Heart left ventricle (tissue), 16 donors: ENCODE measurements at regions of chr1 and their contacts with region 1.

Region 1: DNA sequence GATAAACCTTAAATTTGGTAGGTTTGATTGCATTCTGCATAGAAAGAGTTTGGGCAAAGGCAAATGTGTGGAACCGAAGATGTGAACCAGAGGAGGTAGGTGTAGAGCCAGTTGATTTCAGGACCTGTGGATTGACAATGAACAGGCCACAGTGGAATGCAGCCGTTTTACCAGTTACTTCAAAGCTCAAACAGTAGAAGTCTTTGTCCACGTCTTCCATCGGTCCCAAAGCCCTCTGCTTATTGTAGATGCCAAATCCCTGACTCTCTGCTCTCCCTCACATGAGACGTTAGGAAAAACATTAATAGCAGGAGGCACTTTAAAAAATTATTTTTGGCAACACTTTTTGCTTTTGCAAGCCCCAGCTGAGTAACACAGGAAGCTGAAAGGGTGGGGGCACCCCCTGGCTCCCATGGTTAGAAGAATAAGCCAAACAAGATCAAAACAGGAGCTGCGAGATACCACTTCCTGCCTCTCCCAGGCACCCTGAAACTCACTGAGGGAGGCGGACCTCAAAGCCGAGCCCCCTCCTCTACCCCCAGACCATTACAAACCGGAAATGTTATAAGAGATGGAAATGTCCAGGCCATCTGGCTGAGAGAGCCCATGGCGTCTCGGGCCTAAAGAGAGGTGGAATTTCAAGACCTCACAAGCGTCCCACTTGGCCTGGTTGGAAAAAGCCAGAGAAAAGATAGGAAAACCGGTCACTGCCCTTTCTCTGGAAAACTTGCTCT is 13.5 kb downstream of the TRAF3IP3 start:
- DNase-seq: peak; percentile 77 to 84 (median 84)
- ATAC-seq: peak; percentile 72 to 91 (median 90)
- H3K4me3 ChIP-seq: peak overlapping the region in 5 of 12 donors; percentile 16 to 59 (median 26)
- H3K27ac ChIP-seq: peak overlapping the region; percentile 56 to 90 (median 77)
- H3K4me1 ChIP-seq: peaks cover 4 to 48% (median 20%) of the 10 kb centered on the region in 12 donors
- H3K27me3 ChIP-seq: no peaks in the 10 kb centered on the region
- CTCF ChIP-seq: peak in 1 of 12 donors; percentile 15
- POLR2A ChIP-seq: no peak

Region 2: DNA sequence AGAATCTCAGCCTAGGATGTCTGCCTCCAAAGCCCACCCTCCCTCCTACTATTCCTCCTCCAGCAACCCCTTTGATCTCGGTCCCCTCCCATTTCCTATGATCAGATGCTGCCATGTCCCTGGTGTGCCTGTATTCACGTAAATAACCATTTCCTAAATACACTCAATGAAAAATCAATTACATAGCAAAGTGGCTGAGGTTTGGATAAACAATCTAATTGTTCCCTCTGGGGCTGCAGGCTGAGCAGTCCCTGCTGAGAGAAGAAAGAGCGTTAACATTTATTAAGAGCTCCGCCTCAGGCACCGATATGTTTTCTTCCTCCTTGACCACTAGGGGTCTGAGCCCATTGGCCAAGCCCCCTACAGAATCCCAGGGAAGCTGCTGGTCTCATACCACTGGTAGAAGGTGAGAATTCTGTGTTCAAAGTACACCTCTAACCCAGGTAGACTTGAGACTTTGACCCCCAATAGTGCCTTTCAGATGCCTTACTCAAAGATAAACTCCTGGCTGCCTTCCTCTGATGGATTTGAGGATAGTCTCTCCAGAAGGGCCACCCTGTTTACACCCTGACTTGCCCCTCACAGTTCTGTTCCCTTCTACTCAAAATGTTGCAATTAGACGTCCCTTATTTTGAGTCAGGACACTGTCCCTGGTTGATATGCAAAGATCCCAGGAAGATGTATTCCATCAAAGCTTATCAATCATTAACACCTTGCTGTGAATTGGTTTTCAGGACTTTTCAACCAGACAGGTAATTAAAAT is 219.7 kb before region 1 on chr1:
- intact Hi-C with region 1: no loop called
- DNase-seq: no peak
- ATAC-seq: no peak
- H3K4me3 ChIP-seq: no peak overlapping the region
- H3K27ac ChIP-seq: no peak overlapping the region
- H3K4me1 ChIP-seq: no peaks in the 10 kb centered on the region
- H3K27me3 ChIP-seq: peaks cover 0 to 11% (median 0%) of the 10 kb centered on the region in 9 donors
- CTCF ChIP-seq: peak in 3 of 12 donors; percentile 3 to 29 (median 8)
- POLR2A ChIP-seq: no peak

Region 3: DNA sequence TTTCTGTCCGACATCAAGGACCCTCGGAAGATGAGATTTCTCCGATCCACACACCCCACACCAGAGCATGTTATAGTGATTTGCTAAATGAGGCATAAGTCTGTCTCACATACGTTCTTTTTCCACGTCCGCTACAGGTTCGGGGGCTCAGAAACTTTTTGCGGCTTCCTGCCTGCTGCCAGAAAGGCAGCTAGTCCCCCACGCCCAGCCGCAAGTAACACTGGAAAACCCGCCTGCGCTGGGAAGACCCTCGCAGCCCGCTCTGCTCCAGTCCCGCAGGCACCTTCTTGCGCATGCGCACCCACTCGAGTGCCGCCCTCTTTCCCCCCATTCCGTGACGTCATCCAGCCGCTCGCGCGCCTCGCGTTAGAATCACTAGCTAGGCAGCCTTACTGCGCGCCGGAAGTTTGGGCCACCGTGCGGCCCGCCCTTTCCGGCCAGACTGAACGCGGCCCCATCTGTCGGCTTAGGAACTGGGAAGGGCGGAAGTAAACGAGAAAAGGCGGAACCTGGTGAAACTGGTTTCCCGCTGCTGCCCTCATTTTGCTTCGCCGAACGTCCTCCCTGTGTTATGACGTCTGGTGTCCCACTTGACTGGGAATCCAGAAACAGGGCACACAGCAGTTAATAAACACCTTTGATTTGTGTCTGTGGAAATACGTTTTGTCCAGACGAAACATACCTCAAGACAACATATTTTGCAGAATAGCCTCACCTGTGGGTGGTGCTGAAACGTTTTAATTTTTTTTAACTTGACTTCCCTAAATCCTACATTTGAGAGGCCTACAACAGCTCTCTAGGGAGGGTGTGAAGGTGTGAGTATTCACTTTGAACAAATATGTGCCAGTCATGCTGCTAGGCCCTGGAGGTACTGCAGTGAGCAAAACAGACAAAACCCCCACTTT is 15.2 kb after region 1 on chr1 and contains the start of gene C1orf74:
- intact Hi-C with region 1: loop called in 1 of 10 experiments (anchors 1 kb)
- DNase-seq: peak; percentile 99 to 100 (median 99)
- ATAC-seq: peak; percentile 93 to 99 (median 98)
- H3K4me3 ChIP-seq: peak within 1 kb of the TSS; percentile 42 to 76 (median 64)
- H3K27ac ChIP-seq: peak within 1 kb of the TSS; percentile 70 to 94 (median 86)
- H3K4me1 ChIP-seq: peaks cover 4 to 45% (median 20%) of the 10 kb centered on the region in 12 donors
- H3K27me3 ChIP-seq: no peaks in the 10 kb centered on the region
- CTCF ChIP-seq: peak in 2 of 12 donors; percentile 7 to 23
- POLR2A ChIP-seq: peak in 1 of 2 donors; percentile 83
- total RNA-seq, gene C1orf74: 1.6 to 2.6 (median 2.4) TPM

Region 4: GRCh38 chr1:209827384-209828262 is 58.3 kb after region 1 on chr1 and contains the start of gene UTP25:
- intact Hi-C with region 1: loop called in 1 of 10 experiments (anchors 5 kb)
- DNase-seq: peak; percentile 91 to 95 (median 93)
- ATAC-seq: peak; percentile 81 to 93 (median 89)
- H3K4me3 ChIP-seq: peak within 1 kb of the TSS; percentile 64 to 91 (median 80)
- H3K27ac ChIP-seq: peak within 1 kb of the TSS; percentile 0 to 86 (median 66)
- H3K4me1 ChIP-seq: peaks cover 0 to 27% (median 8%) of the 10 kb centered on the region in 12 donors
- H3K27me3 ChIP-seq: no peaks in the 10 kb centered on the region
- CTCF ChIP-seq: peak; percentile 55 to 90 (median 71)
- POLR2A ChIP-seq: peak in 1 of 2 donors; percentile 62
- total RNA-seq, gene UTP25: 1.6 to 5.5 (median 3.6) TPM

Region 5: GRCh38 chr1:209839875-209840491 is 70.6 kb after region 1 on chr1:
- intact Hi-C with region 1: no loop called
- DNase-seq: no peak
- ATAC-seq: peak in 2 of 4 donors; percentile 48 to 53
- H3K4me3 ChIP-seq: no peak overlapping the region
- H3K27ac ChIP-seq: peak overlapping the region in 2 of 12 donors; percentile 11 to 21
- H3K4me1 ChIP-seq: peaks cover 0 to 16% (median 0%) of the 10 kb centered on the region in 12 donors
- H3K27me3 ChIP-seq: no peaks in the 10 kb centered on the region
- CTCF ChIP-seq: no peak
- POLR2A ChIP-seq: no peak